ENCODE measurements at regions of chr6 and their contacts with region 1.

Region 1: GRCh38 chr6:166046226-166046625 is 121.4 kb downstream of the TBXT start:
- DNase-seq: peak; percentile 95
- H3K4me3 ChIP-seq: no peak overlapping the region
- H3K27ac ChIP-seq: peak overlapping the region; percentile 85
- H3K27me3 ChIP-seq: no peaks in the 10 kb centered on the region
- CTCF ChIP-seq: no peak

Region 2: GRCh38 chr6:166025149-166025898 is 20.9 kb before region 1 on chr6:
- CTCF ChIA-PET with region 1: interaction called, 3 read pairs
- POLR2A ChIA-PET with region 1: interaction called, 10 read pairs
- DNase-seq: peak; percentile 73
- H3K4me3 ChIP-seq: no peak overlapping the region
- H3K27ac ChIP-seq: peak overlapping the region; percentile 93
- H3K27me3 ChIP-seq: no peaks in the 10 kb centered on the region
- CTCF ChIP-seq: no peak

Region 3: GRCh38 chr6:166076625-166077024 is 30.4 kb after region 1 on chr6:
- CTCF ChIA-PET with region 1: interaction called, 3 read pairs
- POLR2A ChIA-PET with region 1: interaction called, 10 read pairs
- DNase-seq: no peak
- H3K4me3 ChIP-seq: no peak overlapping the region
- H3K27ac ChIP-seq: no peak overlapping the region
- H3K27me3 ChIP-seq: peaks cover 7% of the 10 kb centered on the region
- CTCF ChIP-seq: no peak

Region 4: GRCh38 chr6:166143011-166143410 is 96.8 kb after region 1 on chr6:
- CTCF ChIA-PET with region 1: no interaction called
- POLR2A ChIA-PET with region 1: no interaction called
- DNase-seq: no peak
- H3K4me3 ChIP-seq: no peak overlapping the region
- H3K27ac ChIP-seq: no peak overlapping the region
- H3K27me3 ChIP-seq: no peaks in the 10 kb centered on the region
- CTCF ChIP-seq: no peak